A673 (cell line): ENCODE measurements at regions of chr6 and their contacts with region 1.

Region 1: DNA sequence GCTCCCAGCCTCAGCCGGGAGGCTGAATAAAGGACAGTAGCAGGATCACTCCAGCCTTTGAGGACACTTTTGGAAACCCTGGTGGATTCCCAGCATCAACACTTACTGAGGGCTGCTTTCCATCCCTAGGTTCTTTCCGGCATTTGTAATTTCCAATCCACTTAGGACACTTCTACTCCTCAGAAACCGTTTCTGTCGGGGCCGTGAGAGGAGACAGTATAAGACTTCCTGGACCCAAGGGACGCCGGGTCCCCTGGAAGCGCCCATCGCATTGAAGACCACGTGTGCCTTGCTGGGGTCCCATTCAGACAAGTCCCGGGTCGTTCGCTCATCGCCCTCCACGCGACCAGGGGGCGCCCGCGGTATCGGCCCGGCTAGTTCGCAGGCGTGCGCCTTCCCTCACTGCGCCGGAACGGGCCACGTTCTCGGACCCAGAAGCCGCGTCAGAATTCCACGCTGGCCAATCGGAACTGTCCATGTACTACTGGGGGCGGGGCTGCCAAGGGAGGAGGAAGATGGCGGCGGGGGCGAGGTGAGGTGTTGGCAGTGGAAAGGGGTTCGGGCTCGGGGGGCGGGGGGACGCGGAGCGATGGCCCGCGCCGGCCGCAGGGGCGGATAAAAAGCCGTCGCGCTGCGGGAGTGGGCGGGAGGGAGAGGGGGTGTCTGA is at the start of gene NUS1:
- DNase-seq: peak; percentile 99
- H3K4me3 ChIP-seq: peak within 1 kb of the TSS; percentile 80
- H3K27ac ChIP-seq: peak within 1 kb of the TSS; percentile 61
- H3K4me1 ChIP-seq: no peaks in the 10 kb centered on the region
- H3K27me3 ChIP-seq: no peaks in the 10 kb centered on the region
- CTCF ChIP-seq: peak; percentile 92
- total RNA-seq, gene NUS1: 39.6 and 41.0 TPM in 2 replicates

Region 2: GRCh38 chr6:117938311-117938995 is 263.3 kb after region 1 on chr6:
- CTCF ChIA-PET with region 1: no interaction called
- POLR2A ChIA-PET with region 1: no interaction called
- intact Hi-C with region 1: no loop called
- DNase-seq: peak; percentile 11
- H3K4me3 ChIP-seq: no peak overlapping the region
- H3K27ac ChIP-seq: no peak overlapping the region
- H3K4me1 ChIP-seq: no peaks in the 10 kb centered on the region
- H3K27me3 ChIP-seq: no peaks in the 10 kb centered on the region
- CTCF ChIP-seq: no peak

Region 3: GRCh38 chr6:118625833-118626232 is 950.7 kb after region 1 on chr6:
- CTCF ChIA-PET with region 1: no interaction called
- POLR2A ChIA-PET with region 1: interaction called, 11 read pairs
- intact Hi-C with region 1: no loop called
- DNase-seq: no peak
- H3K4me3 ChIP-seq: no peak overlapping the region
- H3K27ac ChIP-seq: no peak overlapping the region
- H3K4me1 ChIP-seq: no peaks in the 10 kb centered on the region
- H3K27me3 ChIP-seq: no peaks in the 10 kb centered on the region
- CTCF ChIP-seq: no peak